ENCODE measurements at regions of chr6 and their contacts with region 1.

Region 1: GRCh38 chr6:34414999-34415858 is 10.6 kb downstream of the RPS10 start:
- DNase-seq: peak; percentile 62
- H3K4me3 ChIP-seq: no peak overlapping the region
- H3K27ac ChIP-seq: peak overlapping the region; percentile 66 to 77 (median 74)
- H3K4me1 ChIP-seq: peaks cover 0 to 13% (median 8%) of the 10 kb centered on the region in 4 donors
- H3K27me3 ChIP-seq: no peaks in the 10 kb centered on the region
- CTCF ChIP-seq: peak; percentile 66 to 91 (median 72)
- EP300 ChIP-seq: no peak
- POLR2A ChIP-seq: no peak

Region 2: GRCh38 chr6:34161857-34162515 is 253.2 kb before region 1 on chr6:
- in situ Hi-C with region 1: loop called in 1 of 4 experiments (anchors 10 kb)
- intact Hi-C with region 1: no loop called
- DNase-seq: no peak
- H3K4me3 ChIP-seq: no peak overlapping the region
- H3K27ac ChIP-seq: no peak overlapping the region
- H3K4me1 ChIP-seq: no peaks in the 10 kb centered on the region
- H3K27me3 ChIP-seq: no peaks in the 10 kb centered on the region
- CTCF ChIP-seq: no peak
- EP300 ChIP-seq: no peak
- POLR2A ChIP-seq: no peak

Region 3: DNA sequence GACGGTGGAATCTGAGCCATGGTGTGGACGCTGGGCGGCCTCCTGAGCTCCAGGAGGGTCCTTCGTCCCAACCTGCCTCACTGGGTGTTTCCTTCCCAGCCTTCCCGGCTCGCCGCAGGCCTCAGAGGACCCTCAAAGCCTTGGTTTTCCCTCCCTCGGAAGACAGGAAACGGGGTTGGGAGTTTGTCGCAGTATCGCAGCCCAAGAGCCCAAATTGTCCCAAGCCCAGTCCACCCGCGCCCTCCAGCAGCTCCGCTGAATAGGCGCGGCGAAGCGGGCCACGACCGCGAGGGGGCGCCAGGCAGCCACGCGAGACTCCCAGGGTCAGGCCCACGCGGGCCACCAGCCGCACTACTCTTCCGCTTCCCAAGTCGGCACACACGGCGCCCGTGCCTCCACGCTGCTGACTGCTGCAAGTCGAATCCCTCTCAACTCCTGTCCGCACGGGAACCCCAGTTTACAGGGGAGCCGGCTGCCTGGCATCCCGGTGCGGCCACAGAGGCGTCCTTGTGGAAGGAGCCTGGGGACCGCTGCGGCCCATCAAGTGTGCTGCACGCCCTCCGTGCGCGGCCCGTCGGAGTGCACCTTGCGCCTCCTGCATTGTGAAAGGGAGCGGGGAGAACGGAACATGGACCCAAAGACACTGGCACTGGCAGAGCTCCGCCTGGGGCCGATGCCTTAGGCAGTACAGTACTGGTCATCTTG is 219.0 kb before region 1 on chr6:
- in situ Hi-C with region 1: loop called in 2 of 4 experiments (anchors 10 to 25 kb)
- intact Hi-C with region 1: loop called (anchors 10 kb)
- DNase-seq: peak; percentile 89
- H3K4me3 ChIP-seq: peak overlapping the region; percentile 28 to 55 (median 42)
- H3K27ac ChIP-seq: no peak overlapping the region
- H3K4me1 ChIP-seq: peaks cover 0 to 9% (median 4%) of the 10 kb centered on the region in 4 donors
- H3K27me3 ChIP-seq: no peaks in the 10 kb centered on the region
- CTCF ChIP-seq: peak; percentile 95 to 99 (median 95)
- EP300 ChIP-seq: no peak
- POLR2A ChIP-seq: no peak

Region 4: GRCh38 chr6:34223956-34224940 is 191.0 kb before region 1 on chr6:
- in situ Hi-C with region 1: loop called in 1 of 4 experiments (anchors 25 kb)
- intact Hi-C with region 1: no loop called
- DNase-seq: peak; percentile 95
- H3K4me3 ChIP-seq: peak overlapping the region; percentile 49 to 76 (median 54)
- H3K27ac ChIP-seq: peak overlapping the region; percentile 91 to 94 (median 92)
- H3K4me1 ChIP-seq: peaks cover 0 to 13% (median 10%) of the 10 kb centered on the region in 4 donors
- H3K27me3 ChIP-seq: no peaks in the 10 kb centered on the region
- CTCF ChIP-seq: no peak
- EP300 ChIP-seq: no peak
- POLR2A ChIP-seq: peak; percentile 81

Region 5: DNA sequence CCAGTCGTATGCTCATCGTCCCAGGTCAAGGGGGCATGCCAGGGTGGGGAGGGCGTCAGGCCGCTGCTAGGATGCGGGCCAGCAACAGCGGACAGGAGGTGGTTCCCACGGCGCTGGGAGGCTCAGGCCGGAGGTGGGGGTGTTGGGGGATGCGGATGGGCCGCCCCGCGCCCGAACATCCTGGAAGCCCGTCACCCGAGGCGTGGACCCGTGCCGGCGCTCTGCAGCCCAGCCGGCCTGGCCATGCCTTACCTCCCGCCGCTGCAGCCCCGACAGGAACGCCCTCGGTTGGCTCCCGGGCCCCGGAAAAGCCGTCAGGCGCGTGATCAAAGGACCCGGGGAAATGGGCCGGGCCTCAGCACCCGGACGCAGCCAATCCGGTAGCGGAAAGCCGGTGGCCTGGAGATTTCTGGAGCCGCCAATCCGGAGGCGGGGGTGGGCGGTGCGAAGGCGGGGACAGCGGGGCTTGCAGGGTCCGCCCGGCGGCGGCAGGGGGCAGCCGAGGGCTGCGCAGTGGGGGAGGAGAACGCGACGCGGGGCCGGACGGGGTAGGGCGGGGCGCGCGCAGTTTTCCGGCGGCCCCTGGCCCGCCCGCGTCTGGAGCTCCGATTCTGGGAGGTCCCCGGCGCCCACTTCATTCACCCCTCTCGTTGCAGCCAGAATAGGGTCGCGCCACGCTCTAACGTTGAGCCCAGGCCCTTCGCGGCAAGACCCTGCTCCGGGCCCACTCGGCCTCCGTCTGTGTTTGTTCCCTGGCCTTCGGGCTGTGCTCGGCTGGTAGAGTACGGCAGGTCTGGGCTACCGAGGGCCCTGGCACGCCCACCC is 166.3 kb before region 1 on chr6 and contains the start of gene SMIM29:
- in situ Hi-C with region 1: loop called in 1 of 4 experiments (anchors 10 kb)
- intact Hi-C with region 1: loop called (anchors 10 kb)
- DNase-seq: peak; percentile 98
- H3K4me3 ChIP-seq: peak within 1 kb of the TSS; percentile 62 to 76 (median 68)
- H3K27ac ChIP-seq: peak within 1 kb of the TSS; percentile 87 to 91 (median 88)
- H3K4me1 ChIP-seq: peaks cover 10 to 26% (median 18%) of the 10 kb centered on the region in 4 donors
- H3K27me3 ChIP-seq: no peaks in the 10 kb centered on the region
- CTCF ChIP-seq: peak; percentile 80 to 98 (median 96)
- EP300 ChIP-seq: no peak
- POLR2A ChIP-seq: peak; percentile 69
- total RNA-seq, gene SMIM29: 8.2 to 14.9 (median 12.5) TPM

Measured in transverse colon (tissue), 4 donors.